Breast epithelium (tissue), 4 donors: ENCODE measurements at regions of chr15 and their contacts with region 1.

Region 1: GRCh38 chr15:47987908-47988532 is 132.8 kb upstream of the SLC24A5 start:
- DNase-seq: no peak
- H3K4me3 ChIP-seq: no peak overlapping the region
- H3K27ac ChIP-seq: no peak overlapping the region
- H3K4me1 ChIP-seq: no peaks in the 10 kb centered on the region
- H3K27me3 ChIP-seq: no peaks in the 10 kb centered on the region
- CTCF ChIP-seq: peak; percentile 39 to 82 (median 72)
- POLR2A ChIP-seq: no peak

Region 2: DNA sequence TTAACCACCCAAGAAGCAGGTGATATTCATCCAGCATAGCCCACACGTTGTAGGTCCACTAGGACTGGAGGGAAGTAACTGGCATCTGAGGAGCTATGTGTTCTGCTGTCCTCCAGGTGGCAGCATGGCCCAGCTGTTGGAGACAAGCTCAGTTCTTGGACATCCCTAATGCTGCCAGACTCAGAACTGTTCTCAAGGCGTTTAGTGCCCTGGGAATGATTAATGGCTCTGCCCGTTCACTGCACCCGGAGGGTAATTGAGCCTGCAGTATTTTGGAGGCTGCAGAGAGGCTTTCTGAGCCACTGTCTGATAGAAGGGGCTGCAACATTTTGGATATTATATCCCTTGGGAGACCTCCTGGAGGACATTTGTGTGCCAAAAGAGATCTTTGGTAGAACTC is 792.0 kb before region 1 on chr15:
- intact Hi-C with region 1: loop called (anchors 10 kb)
- DNase-seq: peak; percentile 67 to 72
- H3K4me3 ChIP-seq: no peak overlapping the region
- H3K27ac ChIP-seq: no peak overlapping the region
- H3K4me1 ChIP-seq: no peaks in the 10 kb centered on the region
- H3K27me3 ChIP-seq: no peaks in the 10 kb centered on the region
- CTCF ChIP-seq: peak; percentile 59 to 91 (median 82)
- POLR2A ChIP-seq: no peak

Region 3: GRCh38 chr15:47266546-47266945 is 721.5 kb before region 1 on chr15:
- intact Hi-C with region 1: no loop called
- DNase-seq: no peak
- H3K4me3 ChIP-seq: no peak overlapping the region
- H3K27ac ChIP-seq: no peak overlapping the region
- H3K4me1 ChIP-seq: no peaks in the 10 kb centered on the region
- H3K27me3 ChIP-seq: no peaks in the 10 kb centered on the region
- CTCF ChIP-seq: no peak
- POLR2A ChIP-seq: no peak

Region 4: DNA sequence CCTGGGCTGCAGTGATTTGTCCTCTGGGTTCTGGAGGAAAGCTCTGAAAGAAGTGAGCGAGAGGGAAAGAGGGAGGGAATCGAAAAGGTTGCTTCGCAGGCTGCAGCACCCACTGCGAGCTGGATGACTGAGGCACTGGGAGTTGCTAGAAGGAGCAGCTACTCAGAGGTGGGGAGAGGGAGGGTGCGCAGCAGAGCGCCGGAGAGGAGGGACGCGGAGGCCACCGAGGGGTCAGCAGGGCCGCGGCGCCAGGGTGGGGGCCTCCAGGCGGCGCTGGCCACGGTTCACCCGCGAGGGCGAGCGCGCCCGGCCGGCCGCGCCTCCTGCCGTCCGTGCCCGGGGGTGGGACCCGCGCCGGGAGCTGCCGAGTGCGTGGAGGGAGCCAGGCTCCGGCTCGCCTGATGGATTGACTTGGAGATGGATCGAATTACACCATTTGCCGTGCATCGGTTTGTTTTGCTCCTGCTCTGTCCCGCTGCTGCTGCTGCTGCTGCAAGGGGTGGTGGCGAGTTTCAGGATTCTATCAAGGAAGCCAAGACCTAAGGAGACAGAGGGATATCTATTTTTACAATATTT is 270.9 kb before region 1 on chr15 and contains the start of gene SEMA6D:
- intact Hi-C with region 1: loop called (anchors 10 kb)
- DNase-seq: peak; percentile 61 to 63
- H3K4me3 ChIP-seq: peak within 1 kb of the TSS; percentile 55 to 83 (median 73)
- H3K27ac ChIP-seq: peak within 1 kb of the TSS; percentile 83 to 91
- H3K4me1 ChIP-seq: no peaks in the 10 kb centered on the region
- H3K27me3 ChIP-seq: peaks cover 0 to 10% of the 10 kb centered on the region in 2 donors
- CTCF ChIP-seq: peak in 1 of 3 donors; percentile 28
- POLR2A ChIP-seq: no peak
- total RNA-seq, gene SEMA6D: 3.0 to 22.8 (median 10.5) TPM

Region 5: GRCh38 chr15:47885921-47886320 is 102.1 kb before region 1 on chr15:
- intact Hi-C with region 1: no loop called
- DNase-seq: no peak
- H3K4me3 ChIP-seq: no peak overlapping the region
- H3K27ac ChIP-seq: no peak overlapping the region
- H3K4me1 ChIP-seq: no peaks in the 10 kb centered on the region
- H3K27me3 ChIP-seq: peaks cover 0 to 2% of the 10 kb centered on the region in 2 donors
- CTCF ChIP-seq: no peak
- POLR2A ChIP-seq: no peak

Region 6: GRCh38 chr15:47975427-47975826 is 12.6 kb before region 1 on chr15:
- intact Hi-C with region 1: no loop called
- DNase-seq: no peak
- H3K4me3 ChIP-seq: no peak overlapping the region
- H3K27ac ChIP-seq: no peak overlapping the region
- H3K4me1 ChIP-seq: no peaks in the 10 kb centered on the region
- H3K27me3 ChIP-seq: no peaks in the 10 kb centered on the region
- CTCF ChIP-seq: no peak
- POLR2A ChIP-seq: no peak